Caco-2 (cell line): ENCODE measurements at regions of chr16 and their contacts with region 1.

Region 1: DNA sequence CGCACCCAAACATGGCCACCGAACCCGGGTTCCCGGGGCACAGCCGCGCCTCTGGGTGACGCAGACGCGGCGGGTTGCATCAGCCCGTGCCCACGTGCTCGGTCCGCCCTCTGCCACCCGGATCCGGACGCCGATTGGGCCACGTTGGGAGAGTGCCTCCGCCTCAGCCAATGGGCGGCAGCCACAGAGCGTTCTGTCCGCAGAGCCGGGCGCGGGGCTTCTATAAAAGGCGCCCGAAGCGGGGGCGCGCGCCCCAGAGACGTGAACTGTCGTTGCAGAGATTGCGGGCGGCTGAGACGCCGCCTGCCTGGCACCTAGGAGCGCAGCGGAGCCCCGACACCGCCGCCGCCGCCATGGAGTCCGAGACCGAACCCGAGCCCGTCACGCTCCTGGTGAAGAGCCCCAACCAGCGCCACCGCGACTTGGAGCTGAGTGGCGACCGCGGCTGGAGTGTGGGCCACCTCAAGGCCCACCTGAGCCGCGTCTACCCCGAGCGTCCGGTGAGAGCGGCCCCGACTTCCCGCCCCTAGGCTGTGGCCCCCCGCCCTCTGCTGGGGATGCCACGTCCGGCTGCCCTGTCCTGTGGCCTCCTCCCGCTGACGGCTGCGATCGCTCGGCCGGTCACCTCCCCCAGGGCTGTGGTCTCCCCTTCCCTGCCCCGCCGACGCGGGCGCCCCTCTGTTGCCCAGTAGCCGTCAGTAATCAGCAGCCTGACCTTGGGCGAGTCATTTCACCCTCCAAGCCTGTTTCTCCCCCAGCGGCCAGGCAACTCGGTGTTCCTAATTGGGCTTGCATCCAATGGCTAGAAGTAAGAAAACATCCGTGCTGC is at the start of gene HERPUD1:
- DNase-seq: peak; percentile 99 to 100
- H3K4me3 ChIP-seq: peak within 1 kb of the TSS; percentile 81
- H3K4me3 Mint-ChIP-seq: peak within 1 kb of the TSS; percentile 100
- H3K27ac Mint-ChIP-seq: peak within 1 kb of the TSS; percentile 99
- H3K4me1 ChIP-seq: peaks cover 28% of the 10 kb centered on the region
- H3K4me1 Mint-ChIP-seq: peaks cover 18% of the 10 kb centered on the region
- H3K27me3 ChIP-seq: no peaks in the 10 kb centered on the region
- H3K27me3 Mint-ChIP-seq: no peaks in the 10 kb centered on the region
- CTCF ChIP-seq: peak; percentile 6 to 20
- total RNA-seq, gene HERPUD1: 240 and 296 TPM in 2 replicates

Region 2: DNA sequence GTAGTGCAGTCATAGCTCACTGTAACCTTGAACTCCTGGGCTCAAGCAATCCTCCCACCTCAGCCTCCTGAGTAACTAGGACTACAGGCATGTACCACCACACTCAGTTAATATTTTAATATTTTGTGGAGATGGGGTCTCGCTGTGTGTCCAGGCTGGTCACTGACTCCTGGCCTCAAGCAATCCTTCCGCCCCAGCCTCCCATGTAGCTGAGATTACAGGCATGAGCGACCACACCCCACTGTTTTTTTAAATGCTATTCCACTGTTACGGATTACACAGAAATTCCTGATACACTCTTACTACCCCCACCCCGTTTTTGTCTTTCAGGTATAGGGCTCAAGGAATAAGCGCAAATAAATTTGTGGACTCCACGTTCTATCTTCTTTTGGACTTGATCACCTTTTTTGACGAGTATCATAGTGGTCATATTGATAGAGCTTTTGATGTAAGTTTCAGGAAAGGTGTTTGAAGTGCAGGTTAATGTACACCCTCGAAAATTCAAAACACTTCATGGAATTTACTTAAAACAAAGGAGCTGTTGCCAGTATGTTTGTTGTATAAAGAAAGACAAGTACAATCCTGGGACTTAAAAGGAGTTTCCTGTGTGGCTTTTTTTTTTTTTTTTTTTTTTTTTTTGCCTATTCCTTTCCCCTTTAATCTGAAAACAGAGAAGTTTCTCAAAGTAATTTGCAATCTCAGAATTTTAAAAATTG is 93.3 kb before region 1 on chr16:
- CTCF ChIA-PET with region 1: no interaction called
- POLR2A ChIA-PET with region 1: interaction called, 11 read pairs
- intact Hi-C with region 1: no loop called
- DNase-seq: peak in 1 of 2 experiments; percentile 32
- H3K4me3 ChIP-seq: no peak overlapping the region
- H3K4me3 Mint-ChIP-seq: peak overlapping the region; percentile 13
- H3K27ac Mint-ChIP-seq: peak overlapping the region; percentile 60
- H3K4me1 ChIP-seq: peaks cover 44% of the 10 kb centered on the region
- H3K4me1 Mint-ChIP-seq: peaks cover 28% of the 10 kb centered on the region
- H3K27me3 ChIP-seq: no peaks in the 10 kb centered on the region
- H3K27me3 Mint-ChIP-seq: no peaks in the 10 kb centered on the region
- CTCF ChIP-seq: no peak

Region 3: GRCh38 chr16:56866943-56867830 is 64.9 kb before region 1 on chr16:
- CTCF ChIA-PET with region 1: no interaction called
- POLR2A ChIA-PET with region 1: interaction called, 4 read pairs
- intact Hi-C with region 1: loop called (anchors 1 kb)
- DNase-seq: peak in 1 of 2 experiments; percentile 68
- H3K4me3 ChIP-seq: no peak overlapping the region
- H3K4me3 Mint-ChIP-seq: no peak overlapping the region
- H3K27ac Mint-ChIP-seq: peak overlapping the region; percentile 60
- H3K4me1 ChIP-seq: peaks cover 38% of the 10 kb centered on the region
- H3K4me1 Mint-ChIP-seq: peaks cover 35% of the 10 kb centered on the region
- H3K27me3 ChIP-seq: no peaks in the 10 kb centered on the region
- H3K27me3 Mint-ChIP-seq: no peaks in the 10 kb centered on the region
- CTCF ChIP-seq: peak; percentile 76 to 83

Region 4: DNA sequence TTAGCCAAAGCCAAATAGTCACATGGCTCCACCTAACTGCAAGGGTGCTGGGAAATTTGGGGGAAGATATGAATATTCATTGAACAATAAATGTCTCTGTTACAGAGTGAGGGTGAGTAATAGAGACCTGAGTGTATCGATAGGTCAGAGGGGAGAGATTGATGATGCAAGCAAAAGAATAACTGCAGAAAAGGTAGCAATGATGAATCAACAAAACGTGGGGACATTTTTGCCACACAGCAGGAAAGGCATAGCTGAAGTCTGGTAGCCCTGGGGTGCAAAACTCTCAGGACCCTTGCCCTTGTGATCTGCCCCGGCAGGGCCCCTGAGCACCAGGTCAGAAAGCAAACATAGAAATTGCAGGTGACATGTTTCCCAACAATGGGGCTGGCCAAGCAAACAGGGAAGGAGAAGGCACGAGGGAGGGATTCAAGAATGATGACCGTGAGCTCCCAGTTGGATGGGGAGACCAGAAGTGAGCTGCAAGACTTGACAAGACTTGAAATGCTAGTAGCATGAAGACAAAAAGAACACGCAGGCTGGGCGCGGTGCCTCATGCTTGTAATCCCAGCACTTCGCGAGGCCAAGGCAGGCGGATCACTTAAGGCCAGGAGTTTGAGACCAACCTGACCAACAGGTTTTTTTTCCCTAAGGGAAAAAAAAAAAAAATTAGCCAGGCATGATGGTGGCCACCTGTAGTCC is 12.9 kb before region 1 on chr16:
- CTCF ChIA-PET with region 1: interaction called, 9 read pairs
- POLR2A ChIA-PET with region 1: interaction called, 18 read pairs
- intact Hi-C with region 1: loop called (anchors 1 kb)
- DNase-seq: peak; percentile 89 to 92
- H3K4me3 ChIP-seq: no peak overlapping the region
- H3K4me3 Mint-ChIP-seq: peak overlapping the region; percentile 63
- H3K27ac Mint-ChIP-seq: peak overlapping the region; percentile 95
- H3K4me1 ChIP-seq: peaks cover 68% of the 10 kb centered on the region
- H3K4me1 Mint-ChIP-seq: peaks cover 50% of the 10 kb centered on the region
- H3K27me3 ChIP-seq: no peaks in the 10 kb centered on the region
- H3K27me3 Mint-ChIP-seq: no peaks in the 10 kb centered on the region
- CTCF ChIP-seq: no peak

Region 5: GRCh38 chr16:57091975-57092785 is 160.1 kb after region 1 on chr16 and contains the start of gene CPNE2:
- CTCF ChIA-PET with region 1: no interaction called
- POLR2A ChIA-PET with region 1: no interaction called
- intact Hi-C with region 1: no loop called
- DNase-seq: peak; percentile 68 to 82
- H3K4me3 ChIP-seq: peak within 1 kb of the TSS; percentile 85
- H3K4me3 Mint-ChIP-seq: peak within 1 kb of the TSS; percentile 77
- H3K27ac Mint-ChIP-seq: peak within 1 kb of the TSS; percentile 59
- H3K4me1 ChIP-seq: peaks cover 14% of the 10 kb centered on the region
- H3K4me1 Mint-ChIP-seq: peaks cover 12% of the 10 kb centered on the region
- H3K27me3 ChIP-seq: no peaks in the 10 kb centered on the region
- H3K27me3 Mint-ChIP-seq: no peaks in the 10 kb centered on the region
- CTCF ChIP-seq: peak in 1 of 2 experiments; percentile 7
- total RNA-seq, gene CPNE2: 37.7 and 46.3 TPM in 2 replicates

Region 6: DNA sequence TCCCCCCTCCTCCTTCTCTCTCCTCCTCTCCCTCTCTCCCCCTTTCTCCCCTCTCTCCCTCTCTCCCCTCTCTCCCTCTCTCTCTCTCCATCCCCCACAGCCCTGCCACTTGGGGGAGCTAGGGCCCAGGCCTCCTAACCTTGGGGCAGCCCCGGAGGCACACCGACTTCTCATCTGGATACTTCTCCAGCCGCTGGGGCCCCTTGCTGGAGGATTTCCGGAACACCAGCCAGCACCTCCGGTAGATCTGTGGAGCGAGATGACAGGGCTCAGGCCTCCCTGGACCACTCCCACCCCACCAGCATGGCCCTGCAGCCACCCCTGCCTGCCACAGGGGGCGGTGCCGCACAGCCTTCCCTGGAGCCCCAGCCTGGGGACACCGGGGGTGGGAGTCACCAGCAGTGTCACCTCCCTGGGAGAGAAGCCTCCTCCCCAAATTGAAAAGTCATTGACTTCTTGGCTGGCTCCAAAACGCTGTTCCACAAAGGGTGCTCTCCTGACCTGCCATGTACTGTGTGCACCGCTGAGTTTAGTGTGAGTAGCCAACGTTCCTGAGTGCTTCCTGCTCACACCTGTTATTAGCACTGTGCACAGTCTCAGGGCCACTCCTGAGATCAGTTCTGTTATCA is 543.7 kb after region 1 on chr16:
- CTCF ChIA-PET with region 1: no interaction called
- POLR2A ChIA-PET with region 1: no interaction called
- intact Hi-C with region 1: no loop called
- DNase-seq: peak; percentile 69 to 71
- H3K4me3 ChIP-seq: no peak overlapping the region
- H3K4me3 Mint-ChIP-seq: no peak overlapping the region
- H3K27ac Mint-ChIP-seq: no peak overlapping the region
- H3K4me1 ChIP-seq: peaks cover 48% of the 10 kb centered on the region
- H3K4me1 Mint-ChIP-seq: peaks cover 36% of the 10 kb centered on the region
- H3K27me3 ChIP-seq: no peaks in the 10 kb centered on the region
- H3K27me3 Mint-ChIP-seq: no peaks in the 10 kb centered on the region
- CTCF ChIP-seq: peak; percentile 51 to 54